Esophagus muscularis mucosa (tissue), 4 donors: ENCODE measurements at regions of chr12 and their contacts with region 1.

Region 1: GRCh38 chr12:52023182-52023975 is 16.6 kb downstream of the TAMALIN start:
- DNase-seq: no peak
- H3K4me3 ChIP-seq: peak overlapping the region; percentile 63 to 70 (median 64)
- H3K27ac ChIP-seq: peak overlapping the region; percentile 48 to 92 (median 88)
- H3K4me1 ChIP-seq: peaks cover 43 to 65% (median 56%) of the 10 kb centered on the region in 4 donors
- H3K27me3 ChIP-seq: no peaks in the 10 kb centered on the region
- CTCF ChIP-seq: peak; percentile 95 to 99 (median 99)
- EP300 ChIP-seq: no peak
- POLR2A ChIP-seq: no peak

Region 2: DNA sequence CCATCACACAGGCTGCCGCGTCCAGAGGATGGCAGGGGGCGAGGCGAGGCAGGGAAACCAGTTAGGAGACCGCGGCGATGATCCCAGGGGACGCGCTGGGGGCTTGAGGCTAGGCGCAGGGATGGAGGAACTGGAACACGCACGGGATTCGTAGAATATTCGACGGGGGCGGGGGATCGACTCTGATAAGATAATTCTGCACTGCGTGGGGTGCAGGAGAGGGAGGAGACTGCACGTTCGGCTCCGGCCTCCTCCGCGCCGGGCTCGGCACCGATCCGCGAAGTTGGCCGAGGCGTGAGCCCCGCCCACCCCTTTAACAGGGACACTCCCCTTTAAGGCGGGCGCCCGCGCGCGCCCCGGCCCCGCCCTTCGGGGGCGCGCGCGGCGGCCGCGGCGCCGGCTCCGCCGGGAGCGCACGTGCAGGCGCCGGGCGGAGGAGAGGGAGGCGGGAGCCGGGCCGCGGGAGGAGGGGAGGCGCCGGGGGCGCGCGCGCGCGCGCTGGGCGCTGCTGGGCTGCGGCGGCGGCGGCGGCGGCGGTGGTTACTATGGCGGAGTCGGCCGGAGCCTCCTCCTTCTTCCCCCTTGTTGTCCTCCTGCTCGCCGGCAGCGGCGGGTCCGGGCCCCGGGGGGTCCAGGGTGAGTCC is 72.1 kb before region 1 on chr12 and contains the start of gene ACVR1B:
- intact Hi-C with region 1: no loop called
- DNase-seq: peak; percentile 97
- H3K4me3 ChIP-seq: peak within 1 kb of the TSS; percentile 74 to 100 (median 96)
- H3K27ac ChIP-seq: peak within 1 kb of the TSS; percentile 88 to 94 (median 90)
- H3K4me1 ChIP-seq: peaks cover 17 to 48% (median 45%) of the 10 kb centered on the region in 4 donors
- H3K27me3 ChIP-seq: no peaks in the 10 kb centered on the region
- CTCF ChIP-seq: no peak
- EP300 ChIP-seq: no peak
- POLR2A ChIP-seq: no peak
- total RNA-seq, gene ACVR1B: 9.1 to 22.4 (median 13.9) TPM

Region 3: DNA sequence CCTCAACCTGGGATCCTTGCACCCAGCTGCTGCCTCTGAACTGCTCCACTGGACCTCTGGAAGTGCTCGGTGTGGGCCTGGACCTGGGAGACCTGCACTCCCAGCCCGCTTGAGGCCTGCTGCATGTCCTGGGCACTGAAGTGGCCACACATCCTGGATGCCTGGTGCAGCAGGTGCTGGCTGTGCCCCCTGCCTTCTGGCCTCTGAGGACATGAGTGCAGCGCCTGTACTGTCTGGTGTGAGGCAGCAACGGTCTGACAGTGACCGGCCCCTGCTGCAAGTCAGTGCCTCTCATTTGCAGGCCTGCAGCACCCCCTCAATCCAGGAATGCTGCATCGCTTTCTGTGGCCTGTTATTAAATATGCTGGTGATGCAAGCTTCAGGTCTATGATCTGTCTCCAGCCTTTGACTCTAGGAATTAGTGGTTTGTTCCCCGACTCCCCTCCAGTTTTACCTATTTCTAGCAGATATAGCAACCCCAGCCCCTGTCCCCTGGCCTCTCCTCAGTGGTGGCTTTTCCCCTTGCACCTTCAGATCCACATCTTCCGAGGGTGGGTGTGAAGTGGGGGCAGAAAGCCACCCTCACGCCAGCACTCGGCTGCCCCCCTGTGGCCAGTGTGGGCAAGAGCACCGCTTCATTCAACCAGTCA is 59.7 kb after region 1 on chr12:
- intact Hi-C with region 1: loop called (anchors 1 kb)
- DNase-seq: no peak
- H3K4me3 ChIP-seq: no peak overlapping the region
- H3K27ac ChIP-seq: peak overlapping the region; percentile 68 to 79 (median 74)
- H3K4me1 ChIP-seq: peaks cover 30 to 46% (median 43%) of the 10 kb centered on the region in 4 donors
- H3K27me3 ChIP-seq: peaks cover 0 to 18% (median 0%) of the 10 kb centered on the region in 4 donors
- CTCF ChIP-seq: peak; percentile 95 to 98 (median 97)
- EP300 ChIP-seq: no peak
- POLR2A ChIP-seq: no peak

Region 4: GRCh38 chr12:52119398-52120254 is 96.2 kb after region 1 on chr12:
- intact Hi-C with region 1: no loop called
- DNase-seq: no peak
- H3K4me3 ChIP-seq: no peak overlapping the region
- H3K27ac ChIP-seq: no peak overlapping the region
- H3K4me1 ChIP-seq: peaks cover 3 to 15% (median 13%) of the 10 kb centered on the region in 4 donors
- H3K27me3 ChIP-seq: peaks cover 0 to 57% (median 2%) of the 10 kb centered on the region in 4 donors
- CTCF ChIP-seq: peak in 2 of 3 experiments; percentile 22 to 41
- EP300 ChIP-seq: no peak
- POLR2A ChIP-seq: no peak